Panc1 (cell line): ENCODE measurements at regions of chr17 and their contacts with region 1.

Region 1: DNA sequence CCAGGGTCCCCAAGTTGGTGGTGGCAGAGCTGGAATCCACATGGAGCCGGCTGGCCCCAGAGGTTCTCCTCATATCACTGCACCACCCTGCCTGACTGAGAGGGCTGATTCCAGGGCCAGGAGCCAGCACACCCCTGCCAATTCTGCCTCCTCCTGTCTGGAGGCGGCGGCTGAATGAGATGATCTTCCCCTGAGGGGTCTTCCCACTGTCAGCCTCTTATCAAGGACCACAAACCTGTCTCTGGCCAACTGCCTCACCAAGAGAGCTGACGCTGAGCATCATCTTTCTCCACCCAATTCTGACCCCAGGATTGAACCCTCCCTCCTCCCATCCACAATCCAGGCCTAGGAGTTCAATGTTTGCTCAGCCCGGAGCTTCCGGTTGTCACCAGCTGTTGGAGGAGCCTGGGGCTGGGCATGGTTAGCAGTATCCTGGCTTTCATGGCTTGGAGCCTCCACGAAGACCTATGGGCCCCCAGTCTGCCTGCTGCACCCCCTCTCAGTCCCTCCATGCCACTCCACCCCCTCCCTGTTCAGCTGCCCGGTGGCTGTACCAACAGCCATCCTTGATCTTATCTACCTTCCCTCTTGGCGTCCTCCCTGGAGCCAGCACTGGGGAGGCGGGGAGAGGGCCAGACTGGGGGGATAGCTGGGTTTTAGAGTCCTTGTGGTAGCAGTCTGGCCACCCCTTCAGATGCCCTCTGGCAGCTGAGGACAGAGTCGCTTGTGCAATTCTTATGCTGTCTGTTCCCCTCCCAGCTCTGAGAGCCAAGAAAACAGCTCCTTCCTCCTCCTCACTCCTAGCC is 25.6 kb downstream of the ABCC3 start:
- DNase-seq: no peak
- ATAC-seq: peak; percentile 13; the same call in 1 of the 2 replicates
- H3K4me3 ChIP-seq: no peak overlapping the region
- H3K27ac ChIP-seq: peak overlapping the region; percentile 85
- H3K4me1 ChIP-seq: peaks cover 59% of the 10 kb centered on the region
- H3K27me3 ChIP-seq: no peaks in the 10 kb centered on the region
- CTCF ChIP-seq: no peak

Region 2: GRCh38 chr17:50931144-50931908 is 271.1 kb after region 1 on chr17:
- CTCF ChIA-PET with region 1: no interaction called
- POLR2A ChIA-PET with region 1: interaction called, 17 read pairs
- in situ Hi-C with region 1: no loop called
- intact Hi-C with region 1: no loop called
- DNase-seq: no peak
- ATAC-seq: peak; percentile 61
- H3K4me3 ChIP-seq: peak overlapping the region; percentile 30 to 55
- H3K27ac ChIP-seq: peak overlapping the region; percentile 41; the same call in 1 of the 2 replicates
- H3K4me1 ChIP-seq: 0 out of 2 replicates have a peak, but pooled peaks cover 5% of the 10 kb centered on the region
- H3K27me3 ChIP-seq: no peaks in the 10 kb centered on the region
- CTCF ChIP-seq: no peak